Activated CD8-positive, alpha-beta T cell treated with anti-CD3 and anti-CD28 coated beads for 36 hours (primary cell): ENCODE measurements at regions of chr10 and their contacts with region 1.

Region 1: DNA sequence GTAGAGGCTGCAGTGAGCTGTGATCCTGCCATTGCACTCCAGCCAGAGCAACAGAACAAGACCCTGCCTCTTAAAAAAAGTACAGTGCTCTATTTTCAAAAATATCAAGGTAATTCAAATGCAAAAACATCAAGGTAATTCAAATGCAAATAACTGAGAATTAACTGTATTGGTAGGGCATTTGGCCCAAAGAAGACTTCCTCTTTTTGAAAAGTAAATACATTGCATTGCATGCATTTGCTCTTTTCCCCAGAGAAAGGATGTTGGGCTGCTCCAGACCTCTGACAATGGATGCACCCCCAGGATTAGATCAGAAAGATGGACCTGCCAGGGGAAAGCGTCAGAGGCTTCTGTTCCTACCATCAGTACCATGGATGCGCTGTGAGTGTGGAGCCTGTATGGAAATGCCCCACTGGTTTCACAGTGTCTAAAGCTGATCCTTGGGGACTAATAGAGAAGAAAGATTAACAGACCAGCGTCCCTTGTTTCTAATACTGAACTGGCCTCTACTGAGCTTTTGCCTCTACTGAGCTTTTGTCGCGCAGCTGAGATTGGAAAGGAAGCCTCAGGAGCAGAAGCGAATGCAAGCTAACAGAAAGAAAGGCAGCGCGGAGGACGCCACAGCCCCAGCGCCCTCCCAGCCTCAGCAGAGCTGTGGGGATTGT is 93.5 kb upstream of the LYZL2 start:
- DNase-seq: no peak
- ATAC-seq: no peak
- H3K4me3 Mint-ChIP-seq: no peak overlapping the region
- H3K27ac Mint-ChIP-seq: no peak overlapping the region
- H3K4me1 Mint-ChIP-seq: no peaks in the 10 kb centered on the region
- H3K27me3 Mint-ChIP-seq: no peaks in the 10 kb centered on the region
- CTCF ChIP-seq: no peak

Region 2: DNA sequence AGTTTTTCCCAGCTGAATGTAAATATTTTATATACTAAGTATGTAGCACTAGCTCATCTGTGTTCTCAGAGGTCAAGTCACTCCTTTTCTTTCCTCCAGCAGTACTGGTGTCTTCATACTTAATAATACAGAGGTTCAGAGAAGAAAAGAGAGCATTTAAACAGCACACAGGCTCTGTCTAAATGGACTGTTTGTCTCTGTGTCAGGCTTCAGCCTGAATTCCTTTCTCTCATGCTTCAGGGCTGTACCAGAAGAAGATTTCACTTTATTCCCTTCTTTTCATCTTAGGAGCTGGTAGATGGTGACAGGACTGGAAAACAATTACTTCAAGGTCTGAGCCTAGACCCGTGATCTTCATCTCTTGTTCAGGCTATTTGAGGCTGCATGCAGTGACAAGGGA is 42.2 kb before region 1 on chr10:
- CTCF ChIA-PET with region 1: interaction called, 119 read pairs
- POLR2A ChIA-PET with region 1: interaction called, 4 read pairs
- intact Hi-C with region 1: loop called (anchors 5 kb)
- DNase-seq: no peak
- ATAC-seq: no peak
- H3K4me3 Mint-ChIP-seq: no peak overlapping the region
- H3K27ac Mint-ChIP-seq: no peak overlapping the region
- H3K4me1 Mint-ChIP-seq: peaks cover 25% of the 10 kb centered on the region
- H3K27me3 Mint-ChIP-seq: peaks cover 11% of the 10 kb centered on the region
- CTCF ChIP-seq: no peak

Region 3: GRCh38 chr10:31808258-31809218 is 1085.5 kb after region 1 on chr10:
- CTCF ChIA-PET with region 1: no interaction called
- POLR2A ChIA-PET with region 1: no interaction called
- intact Hi-C with region 1: loop called (anchors 5 kb)
- DNase-seq: peak; percentile 20
- ATAC-seq: peak; percentile 65
- H3K4me3 Mint-ChIP-seq: peak overlapping the region; percentile 60
- H3K27ac Mint-ChIP-seq: peak overlapping the region; percentile 88
- H3K4me1 Mint-ChIP-seq: peaks cover 7% of the 10 kb centered on the region
- H3K27me3 Mint-ChIP-seq: no peaks in the 10 kb centered on the region
- CTCF ChIP-seq: peak; percentile 69